ENCODE measurements at regions of chr22 and their contacts with region 1.

Region 1: GRCh38 chr22:48594016-48594756 is 1233.5 kb downstream of the BRD1 start:
- DNase-seq: peak; percentile 27

Region 2: DNA sequence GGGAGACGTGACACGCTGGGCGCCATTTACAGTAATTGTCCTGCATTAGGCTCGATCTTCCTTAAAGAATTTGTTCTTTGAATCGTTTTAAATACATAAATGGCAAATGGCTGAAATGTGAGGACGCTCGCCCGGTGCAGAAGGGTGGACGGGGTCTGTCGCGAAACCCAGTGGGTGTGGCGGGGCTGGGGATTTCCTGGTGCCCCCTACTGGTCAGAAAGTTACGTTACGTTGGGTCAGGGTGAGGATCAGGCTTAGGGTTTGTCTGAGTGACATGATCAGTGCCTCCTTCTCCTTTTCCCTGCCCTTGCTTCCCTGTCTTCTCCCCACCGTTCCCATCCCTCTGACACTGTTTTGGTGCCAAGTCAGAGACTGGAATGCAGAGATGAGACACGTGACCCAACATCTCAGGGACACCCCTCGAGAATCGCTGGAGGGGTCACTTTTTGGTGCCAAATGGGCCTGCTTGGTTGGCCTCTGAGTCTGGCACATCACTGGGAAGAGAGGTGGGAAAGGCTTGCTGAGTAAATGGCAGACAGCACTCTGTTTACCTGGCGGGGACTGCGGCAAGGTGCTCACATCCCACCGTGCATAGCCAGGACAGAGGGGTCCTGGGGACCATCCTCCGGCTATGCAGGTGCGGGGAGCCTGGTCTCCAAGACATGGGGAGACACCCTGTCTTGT is 125.9 kb after region 1 on chr22:
- in situ Hi-C with region 1: loop called (anchors 10 kb)
- DNase-seq: no peak